Aorta (tissue), 5 donors: ENCODE measurements at regions of chr20 and their contacts with region 1.

Region 1: GRCh38 chr20:5126512-5127203 is at the start of gene CDS2:
- DNase-seq: peak; percentile 100
- ATAC-seq: peak; percentile 98
- H3K4me3 ChIP-seq: peak within 1 kb of the TSS; percentile 23 to 79
- H3K27ac ChIP-seq: peak within 1 kb of the TSS; percentile 83 to 92
- H3K4me1 ChIP-seq: no peaks in the 10 kb centered on the region
- H3K27me3 ChIP-seq: no peaks in the 10 kb centered on the region
- total RNA-seq, gene CDS2: 78.7 to 135 TPM

Region 2: GRCh38 chr20:4519530-4519929 is 607.1 kb before region 1 on chr20:
- intact Hi-C with region 1: no loop called
- DNase-seq: no peak
- ATAC-seq: peak; percentile 70
- H3K4me3 ChIP-seq: no peak overlapping the region
- H3K27ac ChIP-seq: no peak overlapping the region
- H3K4me1 ChIP-seq: no peaks in the 10 kb centered on the region
- H3K27me3 ChIP-seq: no peaks in the 10 kb centered on the region

Region 3: GRCh38 chr20:5080384-5080877 is 46.2 kb before region 1 on chr20:
- intact Hi-C with region 1: no loop called
- DNase-seq: peak; percentile 85 to 89
- ATAC-seq: peak; percentile 88
- H3K4me3 ChIP-seq: no peak overlapping the region
- H3K27ac ChIP-seq: no peak overlapping the region
- H3K4me1 ChIP-seq: no peaks in the 10 kb centered on the region
- H3K27me3 ChIP-seq: no peaks in the 10 kb centered on the region

Region 4: DNA sequence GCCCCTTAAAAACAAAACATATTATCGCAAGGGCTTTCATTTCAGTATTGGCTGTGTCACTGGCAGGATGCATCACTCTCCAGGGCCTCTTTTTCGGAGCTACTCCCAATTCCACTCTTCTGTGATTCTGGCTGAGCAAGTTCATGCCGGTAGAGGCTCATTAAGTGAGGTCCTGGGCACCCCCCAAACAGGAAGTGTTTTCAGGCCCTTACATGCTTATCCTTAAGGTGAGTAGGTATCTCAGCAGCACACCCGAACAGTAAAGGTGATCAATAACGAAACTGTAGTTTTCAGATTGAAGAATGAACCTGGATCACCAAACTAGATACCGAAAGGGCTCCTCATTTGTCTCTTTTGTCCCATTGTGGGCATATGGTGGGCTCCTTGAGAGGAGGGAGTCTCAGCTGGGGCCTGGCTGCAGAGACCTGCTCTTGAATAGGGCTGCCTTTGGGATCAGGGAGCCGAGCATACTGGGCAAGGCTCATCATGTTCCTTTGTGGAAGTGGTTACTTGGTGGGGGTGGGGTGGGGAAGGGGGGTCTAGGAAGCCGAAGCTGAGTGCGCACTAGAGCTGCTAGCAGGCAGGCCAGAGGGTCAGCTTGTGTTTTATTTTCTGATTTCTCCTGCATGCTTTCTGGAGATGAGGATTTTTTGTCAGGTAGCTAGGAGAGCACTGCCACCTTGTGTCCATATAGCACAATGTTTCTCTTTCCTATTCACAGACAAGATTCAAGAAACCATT is 65.3 kb after region 1 on chr20:
- intact Hi-C with region 1: loop called (anchors 1 to 5 kb)
- DNase-seq: no peak
- ATAC-seq: peak; percentile 86
- H3K4me3 ChIP-seq: no peak overlapping the region
- H3K27ac ChIP-seq: peak overlapping the region; percentile 10 to 85
- H3K4me1 ChIP-seq: no peaks in the 10 kb centered on the region
- H3K27me3 ChIP-seq: no peaks in the 10 kb centered on the region